Dendritic cell treated with granulocyte-macrophage colony-stimulating factor and Interleukin-4, amounts not matched to agents 40 ng/mL and 50 ng/mL, for 4 days (primary cell): ENCODE measurements at regions of chr19 and their contacts with region 1.

Region 1: DNA sequence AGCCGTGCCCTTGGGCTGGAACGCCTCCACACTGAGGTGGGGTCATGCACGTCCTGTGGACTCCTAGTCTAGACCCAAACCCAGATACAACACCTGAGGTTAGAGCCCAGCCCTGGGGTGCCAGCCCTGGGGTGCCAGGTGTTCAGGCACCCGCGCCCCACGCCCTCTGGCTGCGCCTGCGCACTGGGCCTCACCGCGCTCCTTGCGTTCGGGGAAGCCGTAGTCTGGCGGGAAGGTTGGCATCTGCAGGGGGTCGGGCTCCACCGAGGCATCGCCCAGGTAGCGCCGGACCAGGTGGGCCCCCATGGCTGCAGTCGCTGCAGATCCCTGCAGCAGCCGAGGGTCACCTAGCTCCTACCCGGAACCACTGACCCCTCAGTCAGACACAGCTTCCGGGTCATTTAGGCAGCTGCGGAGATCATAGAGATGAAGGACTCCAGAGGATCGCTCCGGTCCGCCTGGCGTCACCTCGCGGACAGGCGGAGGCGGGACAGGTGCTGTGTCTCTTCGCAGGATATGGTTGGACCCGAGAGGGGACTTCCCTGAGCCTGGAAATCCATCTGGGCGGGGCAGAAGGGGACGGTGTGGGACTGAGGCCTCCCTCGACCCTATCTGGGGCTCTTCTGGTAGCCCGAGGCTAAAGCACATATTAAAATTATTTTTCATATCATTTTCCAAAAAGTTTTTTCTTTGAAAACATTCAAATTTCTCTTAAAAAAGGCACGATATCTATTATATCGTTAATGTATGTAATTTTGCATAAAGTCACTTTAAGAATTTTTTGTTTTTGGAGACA is at the start of gene NDUFB7:
- H3K4me3 Mint-ChIP-seq: peak within 1 kb of the TSS; percentile 97
- H3K27ac Mint-ChIP-seq: peak within 1 kb of the TSS; percentile 94
- H3K4me1 Mint-ChIP-seq: peaks cover 66% of the 10 kb centered on the region
- H3K27me3 Mint-ChIP-seq: no peaks in the 10 kb centered on the region

Region 2: DNA sequence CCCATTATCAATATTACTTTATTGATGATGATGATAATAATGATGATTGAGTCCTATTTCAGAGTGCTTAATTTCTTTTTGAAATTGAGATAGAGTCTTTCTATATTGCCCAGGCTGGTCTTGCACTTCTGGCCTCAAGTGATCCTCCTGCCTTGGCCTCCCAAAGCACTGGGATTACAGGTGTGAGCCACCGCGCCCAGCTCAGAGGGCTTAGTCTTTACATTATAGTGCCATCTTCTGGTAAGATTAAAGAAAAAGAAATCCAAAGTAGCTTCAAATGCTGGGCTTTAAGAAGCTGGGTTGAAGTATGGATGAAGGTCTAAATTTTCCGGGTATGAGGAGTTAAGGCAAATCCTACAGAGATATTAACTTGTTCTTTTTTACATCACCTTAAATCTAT is 114.5 kb after region 1 on chr19:
- intact Hi-C with region 1: loop called (anchors 1 kb)
- H3K4me3 Mint-ChIP-seq: no peak overlapping the region
- H3K27ac Mint-ChIP-seq: peak overlapping the region; percentile 34
- H3K4me1 Mint-ChIP-seq: peaks cover 34% of the 10 kb centered on the region
- H3K27me3 Mint-ChIP-seq: no peaks in the 10 kb centered on the region

Region 3: GRCh38 chr19:15125232-15126067 is 553.6 kb after region 1 on chr19:
- intact Hi-C with region 1: loop called (anchors 5 kb)
- H3K4me3 Mint-ChIP-seq: peak overlapping the region; percentile 94
- H3K27ac Mint-ChIP-seq: peak overlapping the region; percentile 99
- H3K4me1 Mint-ChIP-seq: peaks cover 17% of the 10 kb centered on the region
- H3K27me3 Mint-ChIP-seq: peaks cover 5% of the 10 kb centered on the region